ENCODE measurements at regions of chr18 and their contacts with region 1.

Region 1: GRCh38 chr18:66560092-66560491 is 43.8 kb downstream of the CDH19 start:
- DNase-seq: no peak
- H3K4me3 ChIP-seq: no peak overlapping the region
- H3K27ac ChIP-seq: no peak overlapping the region
- H3K4me1 ChIP-seq: no peaks in the 10 kb centered on the region; a peak in 2 of 4 replicates
- H3K27me3 ChIP-seq: no peaks in the 10 kb centered on the region
- CTCF ChIP-seq: peak; percentile 54
- EP300 ChIP-seq: no peak
- RAD21 ChIP-seq: peak; percentile 64

Region 2: DNA sequence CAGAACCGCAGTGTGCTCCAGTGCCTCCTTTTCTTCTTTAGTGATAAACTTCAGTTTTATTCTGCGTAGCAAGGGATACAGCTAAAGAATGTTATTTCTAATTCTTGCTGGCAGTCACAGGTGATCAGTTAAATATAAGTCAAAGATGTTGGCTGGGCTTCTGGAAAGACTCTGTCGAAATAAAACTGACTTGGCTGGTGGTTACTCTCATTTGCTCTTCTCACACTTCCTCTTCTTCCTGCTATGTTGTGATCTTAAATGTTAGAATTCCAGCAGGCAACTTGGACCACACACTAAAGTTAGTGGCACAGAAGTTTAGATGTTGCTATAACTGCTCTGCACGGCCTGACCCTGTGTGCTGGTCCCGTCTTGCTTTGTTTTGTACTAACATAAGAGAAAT is 234.8 kb before region 1 on chr18:
- CTCF ChIA-PET with region 1: no interaction called
- POLR2A ChIA-PET with region 1: no interaction called
- DNase-seq: no peak
- H3K4me3 ChIP-seq: no peak overlapping the region
- H3K27ac ChIP-seq: no peak overlapping the region
- H3K4me1 ChIP-seq: no peaks in the 10 kb centered on the region
- H3K27me3 ChIP-seq: no peaks in the 10 kb centered on the region
- CTCF ChIP-seq: no peak
- EP300 ChIP-seq: no peak
- RAD21 ChIP-seq: no peak

Region 3: DNA sequence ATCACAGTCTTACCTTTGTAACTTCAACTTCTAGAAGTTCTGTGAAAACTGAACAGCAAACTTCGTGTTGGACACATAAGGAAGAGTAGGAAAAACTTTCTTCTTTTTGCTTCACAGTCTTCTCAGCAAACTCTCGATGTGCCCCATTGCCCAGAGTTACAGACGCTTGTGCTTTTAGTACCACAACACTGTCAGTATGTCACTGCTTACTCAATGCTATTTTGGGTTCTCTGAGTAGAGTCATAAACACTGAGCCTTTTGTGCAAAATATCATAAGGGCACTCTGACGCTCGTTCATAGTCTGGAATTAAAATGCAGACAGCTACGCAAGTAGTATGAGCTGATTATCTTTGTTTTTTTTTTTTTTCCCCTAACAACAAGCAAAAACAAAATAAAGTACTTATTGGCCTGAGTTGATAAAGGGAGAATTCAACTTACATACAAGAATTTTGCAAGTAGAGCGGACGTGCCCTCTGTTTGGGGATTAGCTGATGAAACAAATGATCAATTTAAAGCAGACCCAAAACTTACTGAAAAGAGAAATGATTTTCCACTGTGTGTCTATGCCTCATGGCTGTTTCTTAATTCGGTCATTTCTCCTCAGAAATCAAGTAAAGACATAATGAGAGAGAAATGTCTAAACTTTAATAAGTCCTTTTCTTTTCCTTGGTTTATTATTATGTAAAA is 44.0 kb after region 1 on chr18 and contains the start of gene CDH19:
- CTCF ChIA-PET with region 1: no interaction called
- POLR2A ChIA-PET with region 1: no interaction called
- DNase-seq: no peak
- H3K4me3 ChIP-seq: no peak within 1 kb of the TSS
- H3K27ac ChIP-seq: no peak within 1 kb of the TSS
- H3K4me1 ChIP-seq: no peaks in the 10 kb centered on the region
- H3K27me3 ChIP-seq: no peaks in the 10 kb centered on the region
- CTCF ChIP-seq: no peak
- EP300 ChIP-seq: no peak
- RAD21 ChIP-seq: no peak
- polyA plus RNA-seq, gene CDH19: not detected in 2 replicates

Region 4: GRCh38 chr18:66749030-66749429 is 188.9 kb after region 1 on chr18:
- CTCF ChIA-PET with region 1: interaction called, 19 read pairs
- POLR2A ChIA-PET with region 1: no interaction called
- DNase-seq: peak; percentile 34
- H3K4me3 ChIP-seq: no peak overlapping the region
- H3K27ac ChIP-seq: no peak overlapping the region
- H3K4me1 ChIP-seq: no peaks in the 10 kb centered on the region; a peak in 1 of 4 replicates
- H3K27me3 ChIP-seq: no peaks in the 10 kb centered on the region
- CTCF ChIP-seq: peak; percentile 34; the same call in 1 of the 2 replicates
- EP300 ChIP-seq: no peak
- RAD21 ChIP-seq: peak; percentile 78